Activated naive CD8-positive, alpha-beta T cell treated with anti-CD3 and anti-CD28 coated beads, Interleukin-2, amount 10 ng/mL, durations not matched to agents 7 days and 5 days (primary cell): ENCODE measurements at regions of chr6 and their contacts with region 1.

Region 1: GRCh38 chr6:138987640-138988468 is at the start of gene REPS1:
- DNase-seq: peak; percentile 97
- ATAC-seq: peak; percentile 94
- H3K4me3 Mint-ChIP-seq: peak within 1 kb of the TSS; percentile 89
- H3K27ac Mint-ChIP-seq: peak within 1 kb of the TSS; percentile 93
- H3K4me1 Mint-ChIP-seq: peaks cover 20% of the 10 kb centered on the region
- H3K27me3 Mint-ChIP-seq: peaks cover 2% of the 10 kb centered on the region
- total RNA-seq, gene REPS1: 50.5 to 51.3 TPM

Region 2: GRCh38 chr6:138945354-138945753 is 42.5 kb before region 1 on chr6:
- POLR2A ChIA-PET with region 1: no interaction called
- DNase-seq: no peak
- ATAC-seq: no peak
- H3K4me3 Mint-ChIP-seq: no peak overlapping the region
- H3K27ac Mint-ChIP-seq: no peak overlapping the region
- H3K4me1 Mint-ChIP-seq: peaks cover 27% of the 10 kb centered on the region
- H3K27me3 Mint-ChIP-seq: no peaks in the 10 kb centered on the region

Region 3: GRCh38 chr6:139028658-139029469 is 41.0 kb after region 1 on chr6 and contains the start of gene ABRACL:
- POLR2A ChIA-PET with region 1: interaction called, 26 read pairs
- DNase-seq: peak; percentile 75
- ATAC-seq: peak; percentile 86
- H3K4me3 Mint-ChIP-seq: no peak within 1 kb of the TSS
- H3K27ac Mint-ChIP-seq: peak within 1 kb of the TSS; percentile 94
- H3K4me1 Mint-ChIP-seq: peaks cover 23% of the 10 kb centered on the region
- H3K27me3 Mint-ChIP-seq: no peaks in the 10 kb centered on the region
- total RNA-seq, gene ABRACL: 102 to 103 TPM